Colonic mucosa (tissue), 4 donors: ENCODE measurements at regions of chr9 and their contacts with region 1.

Region 1: GRCh38 chr9:6305954-6306563 is 22.1 kb upstream of the TPD52L3 start:
- DNase-seq: no peak
- H3K4me3 ChIP-seq: no peak overlapping the region
- H3K27ac ChIP-seq: no peak overlapping the region
- H3K4me1 ChIP-seq: no peaks in the 10 kb centered on the region
- H3K27me3 ChIP-seq: no peaks in the 10 kb centered on the region
- CTCF ChIP-seq: peak; percentile 40

Region 2: GRCh38 chr9:5886114-5886939 is 419.7 kb before region 1 on chr9:
- intact Hi-C with region 1: loop called (anchors 5 kb)
- DNase-seq: peak; percentile 74
- H3K4me3 ChIP-seq: no peak overlapping the region
- H3K27ac ChIP-seq: no peak overlapping the region
- H3K4me1 ChIP-seq: no peaks in the 10 kb centered on the region
- H3K27me3 ChIP-seq: no peaks in the 10 kb centered on the region
- CTCF ChIP-seq: peak; percentile 90

Region 3: DNA sequence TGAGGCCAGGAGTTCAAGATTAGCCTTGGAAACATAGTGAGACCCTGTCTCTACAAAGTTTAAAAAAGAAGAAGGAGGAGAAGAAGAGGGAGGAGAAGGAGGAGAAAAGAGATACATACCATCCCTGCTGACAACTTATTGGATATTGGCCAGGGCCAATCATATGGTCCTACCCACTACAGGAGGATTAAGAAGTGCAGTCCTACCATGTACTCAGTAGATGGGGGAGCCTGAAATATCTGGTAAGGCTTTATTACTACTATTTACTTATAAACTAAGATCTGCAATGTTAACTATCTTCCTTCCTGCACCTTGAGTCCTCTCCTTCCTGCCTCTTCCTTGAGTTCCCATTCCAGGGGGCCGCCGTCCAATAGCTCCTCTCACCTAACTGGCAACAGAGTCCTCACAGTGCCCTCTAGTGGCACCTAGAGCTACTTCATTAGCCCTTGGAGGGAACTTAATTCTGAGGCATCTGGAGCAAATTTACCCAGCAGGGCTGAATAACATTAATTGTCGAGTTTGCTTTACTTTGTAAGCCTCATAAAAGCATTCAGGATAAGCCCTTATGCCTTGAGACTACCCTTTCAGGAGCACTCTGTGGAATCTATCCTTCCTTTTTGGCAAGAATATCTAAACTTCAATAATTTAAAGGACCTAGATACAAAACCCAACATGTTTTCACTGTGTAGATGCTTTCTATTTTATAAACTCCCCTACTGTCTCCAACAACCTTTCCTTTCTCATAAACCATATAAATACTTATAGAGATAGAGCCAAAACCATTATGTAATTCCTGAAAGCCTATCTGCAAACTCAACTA is 251.6 kb before region 1 on chr9:
- intact Hi-C with region 1: loop called (anchors 5 kb)
- DNase-seq: peak; percentile 63
- H3K4me3 ChIP-seq: no peak overlapping the region
- H3K27ac ChIP-seq: no peak overlapping the region
- H3K4me1 ChIP-seq: no peaks in the 10 kb centered on the region
- H3K27me3 ChIP-seq: no peaks in the 10 kb centered on the region
- CTCF ChIP-seq: peak; percentile 80

Region 4: GRCh38 chr9:6197330-6197729 is 108.7 kb before region 1 on chr9:
- intact Hi-C with region 1: loop called (anchors 2 kb)
- DNase-seq: peak; percentile 32
- H3K4me3 ChIP-seq: no peak overlapping the region
- H3K27ac ChIP-seq: no peak overlapping the region
- H3K4me1 ChIP-seq: no peaks in the 10 kb centered on the region
- H3K27me3 ChIP-seq: no peaks in the 10 kb centered on the region
- CTCF ChIP-seq: peak; percentile 40

Region 5: DNA sequence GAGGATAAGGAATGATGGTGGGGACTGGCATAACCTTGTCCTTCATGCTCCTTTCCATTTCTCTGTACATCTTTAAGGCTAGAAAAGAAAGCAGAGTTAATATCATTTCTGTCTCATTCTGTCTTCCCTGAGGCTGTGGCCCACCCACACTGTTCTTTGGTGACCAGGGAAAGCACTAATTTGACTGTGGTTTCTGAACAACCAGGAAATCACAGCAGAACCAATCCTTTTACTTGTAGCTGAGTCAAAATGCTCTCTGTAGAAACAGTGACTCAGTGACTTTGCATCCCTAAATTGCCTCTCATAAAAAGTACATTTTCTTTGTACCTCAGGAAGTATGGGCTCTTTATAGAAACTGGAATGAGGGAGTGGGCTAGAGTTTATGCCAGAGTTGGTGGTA is 62.3 kb before region 1 on chr9:
- intact Hi-C with region 1: no loop called
- DNase-seq: no peak
- H3K4me3 ChIP-seq: no peak overlapping the region
- H3K27ac ChIP-seq: no peak overlapping the region
- H3K4me1 ChIP-seq: no peaks in the 10 kb centered on the region
- H3K27me3 ChIP-seq: no peaks in the 10 kb centered on the region
- CTCF ChIP-seq: no peak

Region 6: GRCh38 chr9:6467006-6467625 is 161.1 kb after region 1 on chr9:
- intact Hi-C with region 1: no loop called
- DNase-seq: no peak
- H3K4me3 ChIP-seq: no peak overlapping the region
- H3K27ac ChIP-seq: no peak overlapping the region
- H3K4me1 ChIP-seq: no peaks in the 10 kb centered on the region
- H3K27me3 ChIP-seq: no peaks in the 10 kb centered on the region
- CTCF ChIP-seq: no peak